CD4-positive, alpha-beta memory T cell (primary cell): ENCODE measurements at regions of chr2 and their contacts with region 1.

Region 1: DNA sequence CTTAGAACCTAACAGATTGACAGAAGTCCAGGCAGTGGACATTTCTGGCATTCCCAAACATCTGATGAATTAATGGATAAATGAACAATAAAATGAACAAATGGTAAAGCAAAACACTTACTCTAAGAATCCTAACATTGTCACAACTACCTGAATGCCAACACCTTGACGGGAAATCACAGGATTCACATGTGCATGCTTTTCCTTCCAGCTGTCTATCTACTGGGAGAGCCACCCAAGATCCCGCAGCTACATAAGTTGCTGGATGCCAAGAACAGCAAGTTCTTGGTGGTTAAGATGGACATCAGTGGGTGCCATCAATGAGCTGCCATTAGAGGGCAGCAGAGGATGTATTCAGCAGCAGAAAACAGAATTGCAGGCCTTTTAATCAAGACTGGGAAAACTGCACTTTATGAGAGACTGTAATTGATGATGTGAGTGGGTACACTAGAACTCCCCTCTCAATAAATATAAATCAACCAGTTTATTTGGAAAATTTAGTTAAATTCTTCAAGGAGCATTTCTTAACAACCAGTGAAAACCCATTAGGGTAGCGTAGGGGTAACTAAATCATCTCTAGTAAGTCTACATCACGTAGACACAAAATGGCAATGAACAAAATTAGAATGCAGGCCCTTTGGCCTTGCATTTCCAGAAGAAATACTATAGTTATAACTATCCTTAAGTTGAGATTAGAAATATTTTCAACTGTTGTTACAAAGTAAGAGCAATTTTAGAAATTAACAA is 45.6 kb downstream of the SESTD1 start:
- DNase-seq: peak; percentile 12 to 42 (median 28)
- H3K4me3 ChIP-seq: no peak overlapping the region
- H3K4me3 Mint-ChIP-seq: no peak overlapping the region
- H3K27ac ChIP-seq: no peak overlapping the region
- H3K27ac Mint-ChIP-seq: no peak overlapping the region
- H3K4me1 ChIP-seq: no peaks in the 10 kb centered on the region
- H3K4me1 Mint-ChIP-seq: no peaks in the 10 kb centered on the region
- H3K27me3 ChIP-seq: no peaks in the 10 kb centered on the region
- H3K27me3 Mint-ChIP-seq: no peaks in the 10 kb centered on the region

Region 2: DNA sequence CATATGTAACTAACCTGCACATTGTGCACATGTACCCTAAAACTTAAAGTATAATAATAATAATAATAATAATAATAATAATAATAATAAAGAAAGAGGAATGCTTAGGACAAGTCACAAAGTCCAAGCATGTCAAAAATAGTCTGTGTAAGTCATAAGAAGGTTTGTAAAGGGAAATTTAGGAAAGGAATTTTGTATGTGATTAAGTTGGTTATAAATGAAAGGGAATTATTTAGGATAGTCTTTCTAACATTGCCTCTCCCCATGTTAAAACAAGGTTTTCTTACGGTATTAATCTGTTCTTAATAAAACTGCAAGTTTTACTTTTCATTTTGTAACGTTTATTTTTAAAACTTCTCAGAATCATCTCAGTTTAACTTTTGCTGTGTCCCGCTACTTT is 17.2 kb before region 1 on chr2:
- CTCF ChIA-PET with region 1: no interaction called
- POLR2A ChIA-PET with region 1: no interaction called
- intact Hi-C with region 1: loop called (anchors 2 kb)
- DNase-seq: no peak
- H3K4me3 ChIP-seq: no peak overlapping the region
- H3K4me3 Mint-ChIP-seq: no peak overlapping the region
- H3K27ac ChIP-seq: no peak overlapping the region
- H3K27ac Mint-ChIP-seq: no peak overlapping the region
- H3K4me1 ChIP-seq: no peaks in the 10 kb centered on the region
- H3K4me1 Mint-ChIP-seq: no peaks in the 10 kb centered on the region
- H3K27me3 ChIP-seq: no peaks in the 10 kb centered on the region
- H3K27me3 Mint-ChIP-seq: no peaks in the 10 kb centered on the region

Region 3: DNA sequence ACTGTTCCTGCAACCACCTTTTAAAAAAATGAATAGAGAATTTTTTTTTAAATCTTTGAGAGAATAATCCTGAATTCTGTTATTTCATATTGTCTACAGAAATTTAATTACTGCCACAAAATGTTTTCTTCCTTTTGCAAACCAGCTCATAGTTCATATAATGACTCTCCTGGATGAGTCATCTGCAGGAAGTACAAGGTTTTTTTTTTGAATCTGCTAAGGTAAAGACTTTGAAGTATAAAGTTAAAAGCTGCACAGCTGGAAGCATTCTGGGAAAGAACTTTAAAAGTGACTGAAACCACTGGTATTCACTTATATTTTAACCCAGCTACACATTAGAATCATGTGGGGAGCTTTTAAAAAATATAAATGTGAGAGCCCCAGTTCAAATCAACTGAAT is 20.2 kb after region 1 on chr2:
- CTCF ChIA-PET with region 1: no interaction called
- POLR2A ChIA-PET with region 1: no interaction called
- intact Hi-C with region 1: no loop called
- DNase-seq: peak in 2 of 5 donors; percentile 14 to 28
- H3K4me3 ChIP-seq: no peak overlapping the region
- H3K4me3 Mint-ChIP-seq: peak overlapping the region in 1 of 8 donors; percentile 8
- H3K27ac ChIP-seq: no peak overlapping the region
- H3K27ac Mint-ChIP-seq: peak overlapping the region in 2 of 7 donors; percentile 54 to 65
- H3K4me1 ChIP-seq: peaks cover 18% of the 10 kb centered on the region
- H3K4me1 Mint-ChIP-seq: peaks cover 0 to 39% (median 8%) of the 10 kb centered on the region in 4 donors
- H3K27me3 ChIP-seq: no peaks in the 10 kb centered on the region
- H3K27me3 Mint-ChIP-seq: peaks cover 0 to 2% of the 10 kb centered on the region in 2 donors

Region 4: GRCh38 chr2:179264368-179265081 is 45.5 kb after region 1 on chr2 and contains the start of gene SESTD1:
- CTCF ChIA-PET with region 1: interaction called, 3 read pairs
- POLR2A ChIA-PET with region 1: no interaction called
- intact Hi-C with region 1: loop called (anchors 10 kb)
- DNase-seq: peak; percentile 23 to 57 (median 39)
- H3K4me3 ChIP-seq: peak within 1 kb of the TSS in 1 of 2 donors; percentile 51
- H3K4me3 Mint-ChIP-seq: peak within 1 kb of the TSS; percentile 80 to 90 (median 83)
- H3K27ac ChIP-seq: no peak within 1 kb of the TSS
- H3K27ac Mint-ChIP-seq: peak within 1 kb of the TSS in 5 of 7 donors; percentile 9 to 85 (median 52)
- H3K4me1 ChIP-seq: peaks cover 10% of the 10 kb centered on the region
- H3K4me1 Mint-ChIP-seq: peaks cover 4 to 21% (median 13%) of the 10 kb centered on the region in 4 donors
- H3K27me3 ChIP-seq: no peaks in the 10 kb centered on the region
- H3K27me3 Mint-ChIP-seq: peaks cover 10 to 22% of the 10 kb centered on the region in 2 donors
- total RNA-seq, gene SESTD1: 11.5 to 11.9 TPM

Region 5: DNA sequence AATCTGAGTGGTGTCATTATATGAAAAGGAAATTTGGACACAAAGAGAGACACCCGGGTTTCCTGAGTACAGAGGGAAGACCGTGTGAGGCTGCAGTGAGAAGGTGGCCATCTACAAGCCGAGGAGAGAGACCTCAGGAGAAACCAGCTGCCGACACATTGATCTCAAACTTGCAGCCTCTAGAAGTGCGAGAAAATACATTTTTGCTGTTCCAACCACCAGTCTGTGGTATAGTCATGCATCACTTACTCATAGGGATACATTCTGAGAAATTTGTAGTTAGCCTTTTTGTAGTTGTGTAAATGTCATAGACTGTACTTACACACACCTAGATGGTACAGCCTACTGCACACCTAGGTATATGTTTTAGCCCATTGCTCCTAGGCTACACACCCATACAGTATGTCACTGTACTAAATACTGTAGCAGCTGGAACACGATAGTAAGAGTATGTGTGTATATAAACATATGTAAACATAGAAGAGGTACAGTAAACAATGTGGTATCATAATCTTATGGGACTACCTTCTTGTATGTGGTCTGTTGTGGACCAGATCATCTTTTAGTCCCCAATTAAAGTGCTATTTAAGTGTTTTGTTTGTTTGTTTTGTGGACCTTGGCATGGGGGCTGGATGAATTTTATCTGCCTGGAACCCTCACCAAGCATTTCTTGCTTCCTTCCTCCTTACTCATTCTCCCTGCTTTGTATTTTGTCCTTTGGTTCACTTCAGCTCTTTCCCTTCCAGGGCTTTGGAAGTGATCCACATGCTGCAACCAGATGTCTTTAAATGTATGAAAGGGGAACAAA is 83.9 kb after region 1 on chr2:
- CTCF ChIA-PET with region 1: no interaction called
- POLR2A ChIA-PET with region 1: no interaction called
- intact Hi-C with region 1: no loop called
- DNase-seq: no peak
- H3K4me3 ChIP-seq: no peak overlapping the region
- H3K4me3 Mint-ChIP-seq: no peak overlapping the region
- H3K27ac ChIP-seq: no peak overlapping the region
- H3K27ac Mint-ChIP-seq: no peak overlapping the region
- H3K4me1 ChIP-seq: no peaks in the 10 kb centered on the region
- H3K4me1 Mint-ChIP-seq: no peaks in the 10 kb centered on the region
- H3K27me3 ChIP-seq: no peaks in the 10 kb centered on the region
- H3K27me3 Mint-ChIP-seq: peaks cover 0 to 2% of the 10 kb centered on the region in 2 donors

Region 6: GRCh38 chr2:179340668-179341067 is 121.6 kb after region 1 on chr2:
- CTCF ChIA-PET with region 1: no interaction called
- POLR2A ChIA-PET with region 1: no interaction called
- intact Hi-C with region 1: loop called (anchors 1 kb)
- DNase-seq: peak in 1 of 5 donors; percentile 3
- H3K4me3 ChIP-seq: no peak overlapping the region
- H3K4me3 Mint-ChIP-seq: no peak overlapping the region
- H3K27ac ChIP-seq: no peak overlapping the region
- H3K27ac Mint-ChIP-seq: no peak overlapping the region
- H3K4me1 ChIP-seq: no peaks in the 10 kb centered on the region
- H3K4me1 Mint-ChIP-seq: no peaks in the 10 kb centered on the region
- H3K27me3 ChIP-seq: no peaks in the 10 kb centered on the region
- H3K27me3 Mint-ChIP-seq: no peaks in the 10 kb centered on the region

Region 7: GRCh38 chr2:179440642-179441251 is 221.7 kb after region 1 on chr2:
- CTCF ChIA-PET with region 1: interaction called, 23 read pairs
- POLR2A ChIA-PET with region 1: no interaction called
- intact Hi-C with region 1: no loop called
- DNase-seq: peak in 3 of 5 donors; percentile 11 to 32 (median 18)
- H3K4me3 ChIP-seq: no peak overlapping the region
- H3K4me3 Mint-ChIP-seq: no peak overlapping the region
- H3K27ac ChIP-seq: no peak overlapping the region
- H3K27ac Mint-ChIP-seq: no peak overlapping the region
- H3K4me1 ChIP-seq: no peaks in the 10 kb centered on the region
- H3K4me1 Mint-ChIP-seq: no peaks in the 10 kb centered on the region
- H3K27me3 ChIP-seq: no peaks in the 10 kb centered on the region
- H3K27me3 Mint-ChIP-seq: peaks cover 2% of the 10 kb centered on the region in 2 donors